Breast epithelium (tissue), 4 donors: ENCODE measurements at regions of chr1 and their contacts with region 1.

Region 1: GRCh38 chr1:222948079-222948478 is 133.2 kb downstream of the DISP1 start:
- DNase-seq: no peak
- H3K4me3 ChIP-seq: no peak overlapping the region
- H3K27ac ChIP-seq: no peak overlapping the region
- H3K4me1 ChIP-seq: no peaks in the 10 kb centered on the region
- H3K27me3 ChIP-seq: no peaks in the 10 kb centered on the region
- CTCF ChIP-seq: no peak
- POLR2A ChIP-seq: no peak

Region 2: GRCh38 chr1:221897321-221897721 is 1050.8 kb before region 1 on chr1:
- intact Hi-C with region 1: no loop called
- DNase-seq: no peak
- H3K4me3 ChIP-seq: no peak overlapping the region
- H3K27ac ChIP-seq: no peak overlapping the region
- H3K4me1 ChIP-seq: no peaks in the 10 kb centered on the region
- H3K27me3 ChIP-seq: no peaks in the 10 kb centered on the region
- CTCF ChIP-seq: no peak
- POLR2A ChIP-seq: no peak

Region 3: DNA sequence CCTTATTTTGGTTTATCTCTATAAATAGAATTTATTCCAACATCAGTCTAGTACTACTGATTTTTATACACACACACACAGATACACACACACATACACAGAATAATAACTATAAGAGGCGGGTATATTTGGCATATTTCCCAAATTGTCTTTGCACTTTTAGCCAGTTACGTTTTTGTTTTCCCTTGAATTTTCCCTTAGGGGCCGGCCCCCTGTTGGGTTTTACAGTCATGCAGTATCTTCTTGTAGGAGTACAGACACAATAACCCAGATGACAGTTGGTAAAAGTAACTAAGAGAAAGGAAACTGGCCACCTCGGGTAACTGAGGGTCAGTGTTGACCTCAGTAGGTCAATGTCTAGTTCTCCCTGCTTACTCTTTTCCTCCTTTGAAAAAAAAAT is 82.4 kb before region 1 on chr1:
- intact Hi-C with region 1: no loop called
- DNase-seq: no peak
- H3K4me3 ChIP-seq: no peak overlapping the region
- H3K27ac ChIP-seq: no peak overlapping the region
- H3K4me1 ChIP-seq: no peaks in the 10 kb centered on the region
- H3K27me3 ChIP-seq: no peaks in the 10 kb centered on the region
- CTCF ChIP-seq: no peak
- POLR2A ChIP-seq: no peak

Region 4: GRCh38 chr1:222967466-222968240 is 19.6 kb after region 1 on chr1:
- intact Hi-C with region 1: no loop called
- DNase-seq: no peak
- H3K4me3 ChIP-seq: no peak overlapping the region
- H3K27ac ChIP-seq: no peak overlapping the region
- H3K4me1 ChIP-seq: no peaks in the 10 kb centered on the region
- H3K27me3 ChIP-seq: no peaks in the 10 kb centered on the region
- CTCF ChIP-seq: no peak
- POLR2A ChIP-seq: no peak

Region 5: DNA sequence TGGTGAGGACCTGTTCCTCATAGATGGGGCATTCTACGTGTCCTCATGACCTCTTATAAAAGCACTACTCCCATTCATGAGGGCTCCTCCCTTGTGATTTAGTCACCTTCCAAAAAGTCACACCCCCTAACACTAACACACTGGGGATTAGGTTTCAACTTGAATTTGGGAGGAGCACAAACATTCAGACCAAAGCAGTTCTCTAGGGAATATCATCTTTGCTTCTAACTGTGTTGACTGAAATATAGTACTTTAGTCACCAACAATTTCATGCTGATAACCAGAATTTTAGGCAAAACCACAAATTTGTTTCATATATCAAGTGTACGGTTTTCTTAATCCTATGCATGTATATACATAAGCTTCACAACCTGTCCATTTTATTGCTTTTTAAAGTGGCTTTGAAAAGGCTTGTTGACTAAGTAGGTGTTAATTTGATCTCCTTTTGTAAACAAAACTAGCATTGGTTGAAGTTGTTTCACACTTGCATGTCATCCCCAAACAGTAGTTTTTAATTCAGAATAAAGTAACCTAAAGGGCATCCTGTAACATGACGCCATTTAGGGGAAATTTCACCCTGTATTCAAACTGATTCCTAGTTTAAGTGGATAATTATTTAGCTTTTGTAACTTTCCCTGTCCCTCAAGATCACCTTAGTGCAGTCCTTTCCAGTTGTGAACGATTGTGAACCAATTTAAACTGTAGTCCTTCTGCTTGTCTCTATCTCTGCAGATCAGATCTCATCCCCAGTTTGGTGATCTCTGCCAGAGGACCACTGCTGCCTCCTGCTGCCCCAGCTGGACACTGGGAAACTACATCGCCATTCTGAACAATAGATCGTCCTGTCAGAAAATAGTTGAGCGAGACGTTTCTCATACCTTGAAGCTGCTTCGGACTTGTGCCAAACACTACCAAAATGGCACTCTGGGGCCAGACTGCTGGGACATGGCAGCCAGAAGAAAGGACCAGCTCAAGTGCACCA is 53.9 kb after region 1 on chr1:
- intact Hi-C with region 1: loop called (anchors 2 kb)
- DNase-seq: no peak
- H3K4me3 ChIP-seq: no peak overlapping the region
- H3K27ac ChIP-seq: no peak overlapping the region
- H3K4me1 ChIP-seq: no peaks in the 10 kb centered on the region
- H3K27me3 ChIP-seq: no peaks in the 10 kb centered on the region
- CTCF ChIP-seq: no peak
- POLR2A ChIP-seq: no peak